Left cardiac atrium (tissue), 4 donors: ENCODE measurements at regions of chr13 and their contacts with region 1.

Region 1: GRCh38 chr13:101942038-101942437 is 459.8 kb downstream of the FGF14 start:
- DNase-seq: no peak
- ATAC-seq: peak; percentile 82 to 87

Region 2: GRCh38 chr13:101408154-101408553 is 533.9 kb before region 1 on chr13:
- intact Hi-C with region 1: no loop called
- DNase-seq: no peak
- ATAC-seq: peak in 1 of 2 donors; percentile 55

Region 3: GRCh38 chr13:101529422-101529821 is 412.6 kb before region 1 on chr13:
- intact Hi-C with region 1: no loop called
- DNase-seq: no peak
- ATAC-seq: peak in 1 of 2 donors; percentile 65

Region 4: GRCh38 chr13:101763191-101763590 is 178.8 kb before region 1 on chr13:
- intact Hi-C with region 1: no loop called
- DNase-seq: no peak
- ATAC-seq: no peak

Region 5: DNA sequence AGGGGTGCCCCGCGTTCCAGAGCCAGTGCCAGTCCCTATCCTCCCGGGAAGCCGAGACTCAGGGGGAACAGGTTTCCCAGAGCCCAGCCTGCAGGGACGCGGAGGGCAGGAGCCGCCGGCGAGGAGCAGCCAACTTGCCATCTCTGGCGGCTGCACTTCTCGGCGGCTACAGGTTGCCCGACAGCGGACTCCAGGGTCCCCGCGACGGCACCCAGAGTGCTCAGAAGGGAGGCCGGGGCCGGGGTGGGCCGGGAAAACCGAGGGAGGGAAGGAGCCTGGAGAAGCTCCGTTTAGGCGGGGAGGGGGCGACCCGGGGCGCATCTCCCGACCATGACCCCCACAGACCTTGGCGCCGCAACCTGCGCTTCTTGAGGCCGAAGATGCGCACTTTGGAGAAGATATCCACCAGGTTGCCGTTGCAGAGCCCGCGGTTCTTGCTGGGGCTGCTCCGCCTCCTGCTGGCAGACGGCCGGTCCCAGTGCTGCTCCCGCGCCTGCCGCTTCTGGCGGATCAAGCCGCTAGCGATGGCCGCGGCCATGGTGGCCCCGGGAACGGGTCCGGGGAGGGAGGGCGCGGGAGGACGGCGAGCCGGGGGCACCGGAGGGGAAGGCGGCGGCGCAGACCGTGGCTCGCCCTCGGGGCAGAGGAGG is 25.8 kb before region 1 on chr13:
- intact Hi-C with region 1: no loop called
- DNase-seq: peak; percentile 42
- ATAC-seq: peak; percentile 71 to 74

Region 6: DNA sequence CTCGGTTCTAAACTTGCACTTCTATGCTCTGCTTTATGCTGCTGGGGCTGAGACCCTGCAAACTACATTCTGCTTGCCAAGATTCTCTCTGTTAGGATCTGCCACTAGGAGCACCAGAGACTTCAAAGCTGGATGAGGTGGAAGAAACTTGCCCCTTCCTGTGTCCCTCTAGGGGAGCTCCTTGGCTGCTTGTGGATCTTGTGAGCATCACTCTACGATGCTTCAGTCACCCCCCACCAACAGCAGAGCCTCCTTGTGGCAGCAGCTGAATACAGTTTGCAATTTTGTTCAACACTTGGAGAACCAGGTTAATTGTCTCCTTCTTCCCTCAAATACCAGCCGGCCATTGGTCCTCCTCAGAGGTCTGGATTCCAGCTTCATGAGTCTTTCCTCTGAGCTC is 149.2 kb after region 1 on chr13:
- intact Hi-C with region 1: loop called in 1 of 2 experiments (anchors 10 kb)
- DNase-seq: no peak
- ATAC-seq: no peak

Region 7: DNA sequence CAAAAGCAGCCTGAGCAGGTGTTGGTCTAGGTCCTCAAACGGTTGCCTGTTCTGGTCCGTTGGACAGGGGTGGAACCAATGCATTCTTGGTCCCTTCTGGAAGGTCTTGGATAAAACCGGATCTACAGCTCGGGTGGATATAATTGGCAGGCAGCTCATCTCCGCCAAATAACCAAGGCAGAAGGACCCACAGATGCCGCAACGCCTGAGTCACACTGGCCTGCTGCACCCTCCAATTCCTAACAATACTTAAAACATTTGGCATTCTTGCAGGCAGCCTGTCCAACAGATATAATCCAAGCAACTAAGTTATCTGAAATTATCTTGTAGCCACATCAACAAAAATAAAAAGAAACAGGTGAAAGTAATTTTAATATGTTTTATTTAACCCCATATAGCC is 518.8 kb after region 1 on chr13:
- intact Hi-C with region 1: loop called (anchors 2 kb)
- DNase-seq: no peak
- ATAC-seq: no peak

Region 8: DNA sequence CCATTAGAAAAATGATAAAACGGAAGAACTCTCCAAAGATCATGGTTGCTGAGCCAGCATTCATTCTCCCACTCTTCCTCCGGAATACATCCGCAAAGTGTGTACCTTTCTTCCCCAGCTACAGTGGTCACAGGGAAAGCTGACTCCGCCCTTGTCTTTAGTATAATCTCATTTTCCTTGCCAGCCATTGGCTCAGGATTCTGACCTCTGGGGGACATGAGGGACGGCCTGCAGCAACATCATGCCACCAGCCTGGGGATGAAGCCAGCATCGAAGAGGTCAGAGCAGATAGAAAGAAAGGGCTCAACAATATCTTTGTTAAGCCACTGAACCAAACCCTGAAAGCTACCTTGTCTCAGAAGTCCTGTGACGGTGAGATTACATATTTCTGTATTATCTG is 608.5 kb after region 1 on chr13:
- intact Hi-C with region 1: loop called (anchors 5 kb)
- DNase-seq: no peak
- ATAC-seq: no peak

Region 9: GRCh38 chr13:102555917-102556553 is 614.0 kb after region 1 on chr13:
- intact Hi-C with region 1: loop called (anchors 5 kb)
- DNase-seq: no peak
- ATAC-seq: peak; percentile 30 to 47